ENCODE measurements at regions of chr10 and their contacts with region 1.

Region 1: DNA sequence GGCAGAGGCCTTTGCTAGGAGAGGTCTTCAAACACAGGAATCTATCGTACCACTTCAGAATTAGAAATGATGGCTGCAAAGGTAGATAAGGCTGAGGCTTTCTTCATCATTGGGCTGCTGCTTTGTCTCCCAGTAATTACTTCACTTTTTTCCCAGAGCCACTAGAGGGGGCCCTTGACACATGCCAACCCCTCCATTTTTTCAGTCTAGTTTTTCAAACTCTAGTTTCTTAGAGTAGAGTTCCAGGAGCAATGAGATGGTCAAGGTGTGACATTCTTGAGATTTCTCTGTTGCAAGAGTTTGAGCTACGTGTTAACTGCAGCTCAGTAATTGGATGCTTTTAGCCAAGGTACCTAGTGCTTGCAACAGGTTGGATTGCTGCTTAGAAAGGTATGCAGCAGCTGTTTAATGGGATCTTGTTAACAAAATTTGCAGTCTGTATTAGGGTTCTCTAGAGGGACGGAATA is 33.8 kb upstream of the RBM20 start:
- DNase-seq: peak in 8 of 9 experiments; percentile 19 to 73 (median 56)
- ATAC-seq: peak; percentile 77
- H3K4me3 ChIP-seq: no peak overlapping the region
- H3K4me3 Mint-ChIP-seq: no peak overlapping the region
- H3K27ac ChIP-seq: no peak overlapping the region
- H3K27ac Mint-ChIP-seq: no peak overlapping the region
- H3K4me1 ChIP-seq: no peaks in the 10 kb centered on the region
- H3K4me1 Mint-ChIP-seq: peaks cover 10% of the 10 kb centered on the region
- H3K27me3 ChIP-seq: no peaks in the 10 kb centered on the region
- H3K27me3 Mint-ChIP-seq: no peaks in the 10 kb centered on the region
- CTCF ChIP-seq: peak; percentile 84

Region 2: DNA sequence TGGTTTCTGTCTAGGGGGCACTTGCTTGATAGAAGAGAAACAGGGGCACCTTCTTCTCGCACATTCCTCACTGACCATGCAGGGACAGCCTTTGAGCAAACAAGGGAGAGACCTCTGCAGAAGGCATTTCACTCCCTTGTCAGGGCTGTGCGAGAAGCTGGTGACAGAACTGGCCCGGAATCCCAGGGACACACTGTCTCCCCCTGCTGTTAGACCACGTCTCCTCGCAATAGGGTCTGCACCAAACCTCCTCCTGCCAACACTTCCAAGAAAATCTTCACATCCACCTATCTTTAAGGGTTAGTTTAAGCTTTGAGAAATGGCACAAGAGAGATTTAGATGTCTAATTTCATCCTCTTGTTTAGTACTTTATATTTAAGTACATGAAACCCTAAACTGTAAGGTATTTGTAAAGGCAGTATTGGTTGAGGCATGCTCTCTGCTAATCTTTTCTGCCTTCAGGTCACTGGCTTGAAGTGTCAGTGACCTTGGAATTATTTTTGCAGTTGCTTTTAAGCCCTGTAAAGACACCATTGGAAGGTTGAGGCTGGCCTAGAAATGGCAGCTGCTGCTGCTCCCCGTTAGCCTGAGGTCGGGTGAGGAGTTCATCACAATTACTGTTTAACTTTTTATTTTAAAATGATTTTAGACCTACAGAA is 70.8 kb after region 1 on chr10:
- CTCF ChIA-PET with region 1: interaction called, 7 read pairs
- POLR2A ChIA-PET with region 1: no interaction called
- intact Hi-C with region 1: loop called (anchors 1 to 2 kb)
- DNase-seq: peak in 5 of 9 experiments; percentile 16 to 52 (median 35)
- ATAC-seq: no peak
- H3K4me3 ChIP-seq: no peak overlapping the region
- H3K4me3 Mint-ChIP-seq: no peak overlapping the region
- H3K27ac ChIP-seq: no peak overlapping the region
- H3K27ac Mint-ChIP-seq: no peak overlapping the region
- H3K4me1 ChIP-seq: peaks cover 3% of the 10 kb centered on the region
- H3K4me1 Mint-ChIP-seq: peaks cover 4% of the 10 kb centered on the region
- H3K27me3 ChIP-seq: no peaks in the 10 kb centered on the region
- H3K27me3 Mint-ChIP-seq: peaks cover 7% of the 10 kb centered on the region
- CTCF ChIP-seq: peak; percentile 28

Region 3: DNA sequence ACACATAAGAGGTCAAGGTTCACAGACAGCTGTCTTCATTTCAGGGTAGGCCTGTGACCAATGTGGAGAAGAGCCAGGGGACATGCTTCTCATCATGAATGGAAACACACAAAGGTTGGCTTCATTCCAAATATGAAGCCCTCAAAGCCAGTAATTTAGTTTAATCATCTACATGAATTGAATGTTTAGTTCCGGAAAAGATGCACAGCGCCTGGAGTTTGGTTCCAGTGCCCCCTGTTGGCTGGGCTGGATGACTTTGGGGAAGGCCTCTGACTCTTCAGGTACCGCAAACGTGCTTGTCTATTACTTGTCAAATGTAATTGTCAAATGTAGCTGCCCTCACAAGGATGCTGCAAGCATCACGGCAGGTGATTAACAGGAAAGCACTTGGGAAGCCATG is 597.2 kb after region 1 on chr10:
- CTCF ChIA-PET with region 1: interaction called, 3 read pairs
- POLR2A ChIA-PET with region 1: no interaction called
- intact Hi-C with region 1: loop called in 1 of 2 experiments (anchors 2 kb)
- DNase-seq: peak in 4 of 9 experiments; percentile 16 to 31 (median 22)
- ATAC-seq: no peak
- H3K4me3 ChIP-seq: no peak overlapping the region
- H3K4me3 Mint-ChIP-seq: no peak overlapping the region
- H3K27ac ChIP-seq: no peak overlapping the region
- H3K27ac Mint-ChIP-seq: no peak overlapping the region
- H3K4me1 ChIP-seq: no peaks in the 10 kb centered on the region
- H3K4me1 Mint-ChIP-seq: no peaks in the 10 kb centered on the region
- H3K27me3 ChIP-seq: no peaks in the 10 kb centered on the region
- H3K27me3 Mint-ChIP-seq: peaks cover 3% of the 10 kb centered on the region
- CTCF ChIP-seq: no peak

Region 4: DNA sequence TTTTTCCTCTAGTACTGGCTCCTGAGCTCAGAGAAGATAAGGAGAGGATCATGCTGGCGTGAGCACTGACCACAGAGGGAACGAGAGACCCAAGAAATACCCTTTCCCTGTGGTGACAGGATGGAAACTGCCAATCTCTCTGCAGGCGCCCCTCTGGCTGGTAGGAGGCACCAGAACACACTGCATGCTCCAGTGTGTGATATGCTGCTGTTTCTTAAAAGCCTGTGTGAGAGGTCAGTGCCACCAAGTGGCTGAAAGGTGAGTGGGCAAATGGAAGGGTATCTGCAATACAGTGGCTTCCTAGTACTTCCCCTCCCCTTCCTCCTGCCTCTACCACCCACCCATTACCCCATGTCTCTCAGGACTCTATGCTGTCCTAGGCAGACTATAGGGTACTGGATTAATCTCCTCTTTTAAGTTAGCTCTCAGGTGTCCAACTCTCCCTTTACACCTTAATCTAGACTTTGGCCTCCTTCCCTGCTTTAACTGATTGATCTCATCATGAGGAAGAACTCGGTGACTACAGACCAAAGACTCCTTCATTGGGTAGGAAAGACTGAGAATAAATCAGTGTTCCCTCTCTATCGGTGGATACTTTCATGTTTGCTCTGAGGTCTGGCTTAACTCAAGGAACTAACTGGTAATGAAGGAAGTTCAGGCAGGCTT is 750.1 kb after region 1 on chr10:
- CTCF ChIA-PET with region 1: no interaction called
- POLR2A ChIA-PET with region 1: no interaction called
- intact Hi-C with region 1: loop called in 1 of 2 experiments (anchors 5 kb)
- DNase-seq: peak in 3 of 9 experiments; percentile 22 to 37 (median 24)
- ATAC-seq: no peak
- H3K4me3 ChIP-seq: no peak overlapping the region
- H3K4me3 Mint-ChIP-seq: no peak overlapping the region
- H3K27ac ChIP-seq: no peak overlapping the region
- H3K27ac Mint-ChIP-seq: no peak overlapping the region
- H3K4me1 ChIP-seq: no peaks in the 10 kb centered on the region
- H3K4me1 Mint-ChIP-seq: no peaks in the 10 kb centered on the region
- H3K27me3 ChIP-seq: peaks cover 2 to 4% of the 10 kb centered on the region in 2 experiments
- H3K27me3 Mint-ChIP-seq: peaks cover 25% of the 10 kb centered on the region
- CTCF ChIP-seq: no peak

Region 5: DNA sequence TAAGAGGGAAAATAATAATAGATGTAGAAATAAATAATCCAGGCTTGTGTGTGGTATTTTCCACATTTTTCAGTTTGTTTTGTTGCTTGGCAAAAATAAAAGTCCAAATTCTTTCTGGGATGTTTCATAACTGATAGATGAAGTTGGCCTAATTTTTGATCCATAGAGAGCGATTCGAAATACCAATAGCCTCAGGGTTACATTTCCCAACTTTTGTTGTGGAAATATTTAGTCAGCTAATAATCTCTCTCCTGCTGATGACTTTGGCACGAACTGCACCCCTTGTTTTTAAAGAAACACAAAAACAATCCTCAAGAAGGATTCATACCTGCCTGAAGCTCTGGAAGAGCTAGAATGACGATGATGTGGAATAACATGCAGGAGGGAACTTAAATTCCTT is 949.7 kb after region 1 on chr10:
- CTCF ChIA-PET with region 1: no interaction called
- POLR2A ChIA-PET with region 1: no interaction called
- intact Hi-C with region 1: no loop called
- DNase-seq: no peak
- ATAC-seq: no peak
- H3K4me3 ChIP-seq: no peak overlapping the region
- H3K4me3 Mint-ChIP-seq: no peak overlapping the region
- H3K27ac ChIP-seq: no peak overlapping the region
- H3K27ac Mint-ChIP-seq: no peak overlapping the region
- H3K4me1 ChIP-seq: no peaks in the 10 kb centered on the region
- H3K4me1 Mint-ChIP-seq: no peaks in the 10 kb centered on the region
- H3K27me3 ChIP-seq: no peaks in the 10 kb centered on the region
- H3K27me3 Mint-ChIP-seq: peaks cover 3% of the 10 kb centered on the region
- CTCF ChIP-seq: no peak

Region 6: GRCh38 chr10:112314822-112315474 is 1704.6 kb after region 1 on chr10:
- CTCF ChIA-PET with region 1: no interaction called
- POLR2A ChIA-PET with region 1: no interaction called
- intact Hi-C with region 1: loop called in 1 of 2 experiments (anchors 2 kb)
- DNase-seq: peak; percentile 43 to 80 (median 76)
- ATAC-seq: peak; percentile 61
- H3K4me3 ChIP-seq: no peak overlapping the region
- H3K4me3 Mint-ChIP-seq: no peak overlapping the region
- H3K27ac ChIP-seq: no peak overlapping the region
- H3K27ac Mint-ChIP-seq: no peak overlapping the region
- H3K4me1 ChIP-seq: no peaks in the 10 kb centered on the region
- H3K4me1 Mint-ChIP-seq: no peaks in the 10 kb centered on the region
- H3K27me3 ChIP-seq: no peaks in the 10 kb centered on the region
- H3K27me3 Mint-ChIP-seq: peaks cover 30% of the 10 kb centered on the region
- CTCF ChIP-seq: peak; percentile 86

Measured in CD8-positive, alpha-beta T cell (primary cell).